ENCODE measurements at regions of chr17 and their contacts with region 1.

Region 1: DNA sequence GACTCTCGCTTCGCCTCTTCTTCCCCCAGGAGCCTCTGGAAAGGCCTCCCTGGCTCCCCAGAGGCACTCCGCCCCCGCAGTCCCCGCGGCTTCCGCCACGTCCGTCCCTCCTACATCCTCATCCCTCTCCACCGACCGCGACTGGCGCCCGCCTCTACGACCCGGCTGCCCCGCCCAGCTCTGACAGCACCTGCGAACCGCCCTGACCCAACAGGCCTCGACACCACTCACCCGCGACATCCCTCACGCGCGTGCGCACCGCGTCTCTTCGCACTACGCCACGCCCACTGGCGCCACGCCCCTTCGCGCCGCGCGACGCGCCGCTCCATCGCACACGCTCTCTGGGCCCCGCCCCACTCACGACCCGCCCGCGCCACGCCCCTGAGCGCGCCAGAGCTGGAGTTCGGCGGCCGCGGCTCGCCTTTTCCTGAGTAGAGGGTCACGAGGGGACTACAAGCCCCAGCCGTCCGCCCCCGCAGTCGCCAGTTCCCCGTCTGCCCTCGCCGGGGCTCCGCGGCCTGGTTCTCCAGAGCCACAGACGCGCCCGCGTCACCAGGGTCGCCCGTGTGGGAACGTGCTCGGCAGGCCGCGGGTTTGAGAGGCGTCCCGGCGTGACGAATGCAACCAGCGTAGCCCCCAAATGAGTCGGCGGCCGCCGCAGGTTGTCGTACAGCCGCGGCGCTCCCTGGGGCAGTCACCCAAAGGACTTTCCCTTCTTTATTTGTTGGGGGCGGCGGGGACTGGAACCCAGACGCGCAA is 56.2 kb upstream of the LRRC37A3 start:
- DNase-seq: peak; percentile 98
- H3K4me3 Mint-ChIP-seq: peak overlapping the region; percentile 84
- H3K27ac Mint-ChIP-seq: peak overlapping the region; percentile 94
- H3K4me1 Mint-ChIP-seq: peaks cover 59% of the 10 kb centered on the region
- H3K27me3 Mint-ChIP-seq: no peaks in the 10 kb centered on the region

Region 2: DNA sequence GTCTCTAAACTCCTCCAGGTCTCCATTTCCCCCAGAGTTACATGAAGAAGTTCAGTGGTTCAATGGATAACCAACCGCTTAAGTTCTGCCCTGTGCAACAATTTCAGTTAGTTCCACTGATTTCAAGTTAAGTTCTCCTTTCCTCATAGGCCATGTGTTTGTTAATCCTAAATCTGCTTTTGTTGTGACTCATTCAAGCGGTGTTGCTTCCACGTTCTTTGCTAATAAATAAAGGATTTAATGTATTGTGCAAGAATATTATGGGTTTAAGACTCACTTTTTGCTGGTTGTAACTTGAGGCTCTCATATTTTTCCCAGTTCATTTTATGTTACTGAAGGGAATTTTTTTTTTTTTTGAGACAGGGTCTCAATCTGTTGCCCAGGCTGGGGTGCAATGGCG is 44.8 kb after region 1 on chr17:
- CTCF ChIA-PET with region 1: no interaction called
- POLR2A ChIA-PET with region 1: interaction called, 11 read pairs
- DNase-seq: no peak
- H3K4me3 Mint-ChIP-seq: no peak overlapping the region
- H3K27ac Mint-ChIP-seq: no peak overlapping the region
- H3K4me1 Mint-ChIP-seq: peaks cover 65% of the 10 kb centered on the region
- H3K27me3 Mint-ChIP-seq: no peaks in the 10 kb centered on the region

Region 3: GRCh38 chr17:65027305-65027704 is 51.8 kb after region 1 on chr17:
- CTCF ChIA-PET with region 1: interaction called, 5 read pairs
- POLR2A ChIA-PET with region 1: interaction called, 10 read pairs
- DNase-seq: peak; percentile 59
- H3K4me3 Mint-ChIP-seq: peak overlapping the region; percentile 63
- H3K27ac Mint-ChIP-seq: peak overlapping the region; percentile 85
- H3K4me1 Mint-ChIP-seq: peaks cover 84% of the 10 kb centered on the region
- H3K27me3 Mint-ChIP-seq: no peaks in the 10 kb centered on the region

Region 4: DNA sequence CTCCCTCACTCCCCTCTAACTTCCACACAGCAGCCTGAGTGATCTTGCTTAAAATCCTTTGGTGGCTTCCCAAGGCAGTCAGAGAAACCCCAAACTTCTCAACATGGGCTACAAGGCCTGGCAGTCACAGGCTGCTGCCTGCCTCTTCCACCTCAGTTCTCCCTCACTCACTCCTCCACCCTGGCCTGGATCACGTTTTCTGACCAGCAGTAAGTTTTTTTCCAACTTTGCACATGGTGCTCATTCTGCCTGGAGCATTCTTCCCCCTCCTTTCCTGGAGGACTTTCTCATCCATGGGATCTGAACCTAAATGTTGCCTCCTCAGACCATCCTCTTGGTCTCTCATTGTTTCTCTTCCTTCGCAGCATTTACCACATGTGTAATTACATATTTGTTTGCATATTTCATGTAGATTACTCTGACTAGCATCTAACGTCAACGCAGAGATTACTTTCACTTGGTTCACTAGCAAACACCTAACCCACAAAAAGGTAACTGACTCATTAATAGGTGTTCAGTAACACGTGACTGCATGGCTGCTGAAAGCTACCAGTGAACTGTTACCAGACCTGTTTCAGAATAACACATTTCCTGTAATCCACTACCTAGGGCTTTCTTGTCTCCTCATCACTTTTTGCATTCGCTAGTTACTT is 64.0 kb after region 1 on chr17:
- CTCF ChIA-PET with region 1: interaction called, 6 read pairs
- POLR2A ChIA-PET with region 1: interaction called, 22 read pairs
- DNase-seq: peak; percentile 66
- H3K4me3 Mint-ChIP-seq: peak overlapping the region; percentile 58
- H3K27ac Mint-ChIP-seq: peak overlapping the region; percentile 82
- H3K4me1 Mint-ChIP-seq: peaks cover 84% of the 10 kb centered on the region
- H3K27me3 Mint-ChIP-seq: no peaks in the 10 kb centered on the region

Region 5: DNA sequence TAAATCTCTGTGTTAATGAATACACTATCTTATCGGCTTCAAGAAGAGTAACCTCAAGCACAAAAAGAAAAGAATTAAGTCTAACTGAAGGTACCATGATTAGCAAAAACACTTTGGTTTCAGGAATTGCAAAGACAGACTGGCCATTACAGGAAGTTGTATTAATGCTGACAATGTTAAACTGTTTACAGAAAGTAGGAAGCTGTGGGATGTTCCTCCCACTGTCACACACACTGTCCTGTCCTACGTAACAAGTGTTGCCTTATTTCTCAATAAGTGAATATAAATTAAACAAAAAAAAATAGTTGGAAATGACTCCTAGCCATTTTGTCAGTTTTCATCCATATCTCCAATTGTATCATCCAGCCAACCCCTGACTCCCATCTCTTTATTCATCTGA is 72.4 kb after region 1 on chr17:
- CTCF ChIA-PET with region 1: no interaction called
- POLR2A ChIA-PET with region 1: interaction called, 19 read pairs
- DNase-seq: no peak
- H3K4me3 Mint-ChIP-seq: no peak overlapping the region
- H3K27ac Mint-ChIP-seq: peak overlapping the region; percentile 59
- H3K4me1 Mint-ChIP-seq: peaks cover 79% of the 10 kb centered on the region
- H3K27me3 Mint-ChIP-seq: no peaks in the 10 kb centered on the region

Region 6: DNA sequence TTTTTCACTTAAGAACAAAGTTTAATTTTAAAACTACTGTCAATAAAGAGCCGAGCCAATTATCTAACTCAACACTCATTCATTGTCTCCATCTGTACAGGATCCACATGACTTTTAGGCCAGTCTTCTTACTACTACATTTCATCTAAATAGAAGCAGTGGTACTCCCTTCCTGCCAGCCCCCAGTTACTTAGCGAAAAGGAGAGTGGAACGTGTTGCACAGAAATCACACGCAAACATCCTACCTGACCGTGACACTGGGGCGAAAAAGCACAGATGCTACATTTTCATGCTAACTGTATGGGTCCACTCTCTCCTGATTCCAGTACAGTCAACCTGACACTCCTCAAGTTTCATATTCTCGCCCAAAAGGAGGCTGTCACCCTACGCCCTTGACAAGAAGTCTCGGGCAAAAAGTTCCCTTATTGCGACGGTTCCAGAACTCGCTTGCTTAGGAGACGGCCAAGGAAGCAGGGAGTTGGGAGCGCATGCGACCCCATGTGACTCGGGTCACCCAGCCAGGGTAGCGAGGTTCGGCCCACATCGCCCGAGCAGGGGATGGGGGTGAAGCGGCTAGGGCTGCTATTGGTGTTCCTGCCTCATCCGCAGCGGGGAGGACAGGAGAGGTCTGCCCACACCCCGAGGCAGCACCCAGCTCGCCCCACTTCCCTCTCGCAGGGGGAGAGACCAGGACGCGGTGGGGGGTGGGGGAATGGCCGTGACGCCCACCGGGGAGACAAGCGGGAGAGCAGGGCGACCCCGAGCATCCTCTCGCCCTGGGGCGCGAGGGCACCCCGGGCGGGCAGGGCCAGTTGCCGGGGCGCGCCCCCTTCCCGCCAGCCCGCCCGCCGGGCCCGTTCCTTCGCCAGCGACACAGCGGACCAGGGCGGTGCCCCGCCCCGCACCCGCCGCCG is 80.1 kb after region 1 on chr17:
- CTCF ChIA-PET with region 1: no interaction called
- POLR2A ChIA-PET with region 1: interaction called, 46 read pairs
- DNase-seq: peak; percentile 57
- H3K4me3 Mint-ChIP-seq: peak overlapping the region; percentile 96
- H3K27ac Mint-ChIP-seq: peak overlapping the region; percentile 91
- H3K4me1 Mint-ChIP-seq: peaks cover 51% of the 10 kb centered on the region
- H3K27me3 Mint-ChIP-seq: peaks cover 2% of the 10 kb centered on the region

Region 7: GRCh38 chr17:65122836-65123756 is 147.6 kb after region 1 on chr17:
- CTCF ChIA-PET with region 1: no interaction called
- POLR2A ChIA-PET with region 1: interaction called, 13 read pairs
- DNase-seq: peak; percentile 89
- H3K4me3 Mint-ChIP-seq: peak overlapping the region; percentile 75
- H3K27ac Mint-ChIP-seq: peak overlapping the region; percentile 97
- H3K4me1 Mint-ChIP-seq: peaks cover 48% of the 10 kb centered on the region
- H3K27me3 Mint-ChIP-seq: peaks cover 11% of the 10 kb centered on the region